ENCODE measurements at regions of chr16 and their contacts with region 1.

Region 1: DNA sequence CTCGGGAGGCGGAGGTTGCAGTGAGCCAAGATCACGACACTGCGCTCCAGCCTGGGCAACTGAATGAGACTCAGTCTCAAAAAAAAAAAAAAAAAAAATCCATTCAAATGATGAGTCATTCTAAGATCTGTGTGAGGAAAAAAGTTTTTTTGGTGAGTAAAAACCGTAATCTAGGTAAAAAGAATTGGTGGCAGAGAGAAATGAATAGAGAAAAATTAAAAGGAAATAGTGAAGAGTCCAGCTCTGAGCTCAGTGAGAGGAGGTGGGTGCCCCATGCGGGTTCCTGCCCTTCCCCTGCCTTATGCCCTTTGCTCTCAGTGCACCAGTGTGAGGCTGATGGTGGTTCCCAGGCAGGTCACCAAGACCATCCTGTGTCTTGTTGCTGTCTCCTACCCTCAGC is 20.9 kb downstream of the GAN start:
- DNase-seq: peak; percentile 79
- ATAC-seq: peak; percentile 98
- H3K4me3 Mint-ChIP-seq: no peak overlapping the region
- H3K27ac Mint-ChIP-seq: peak overlapping the region; percentile 57
- H3K4me1 Mint-ChIP-seq: peaks cover 27% of the 10 kb centered on the region
- H3K27me3 Mint-ChIP-seq: no peaks in the 10 kb centered on the region

Region 2: GRCh38 chr16:81349996-81350618 is 14.4 kb after region 1 on chr16:
- CTCF ChIA-PET with region 1: interaction called, 5 read pairs
- POLR2A ChIA-PET with region 1: no interaction called
- intact Hi-C with region 1: loop called in 1 of 2 experiments (anchors 1 kb)
- DNase-seq: no peak
- ATAC-seq: peak; percentile 25
- H3K4me3 Mint-ChIP-seq: no peak overlapping the region
- H3K27ac Mint-ChIP-seq: no peak overlapping the region
- H3K4me1 Mint-ChIP-seq: peaks cover 15% of the 10 kb centered on the region
- H3K27me3 Mint-ChIP-seq: no peaks in the 10 kb centered on the region

Region 3: GRCh38 chr16:81415751-81416150 is 80.1 kb after region 1 on chr16:
- CTCF ChIA-PET with region 1: no interaction called
- POLR2A ChIA-PET with region 1: no interaction called
- intact Hi-C with region 1: no loop called
- DNase-seq: no peak
- ATAC-seq: no peak
- H3K4me3 Mint-ChIP-seq: no peak overlapping the region
- H3K27ac Mint-ChIP-seq: no peak overlapping the region
- H3K4me1 Mint-ChIP-seq: peaks cover 6% of the 10 kb centered on the region
- H3K27me3 Mint-ChIP-seq: no peaks in the 10 kb centered on the region

Measured in activated CD4-positive, alpha-beta T cell treated with anti-CD3 and anti-CD28 coated beads for 36 hours (primary cell).